ENCODE measurements at regions of chr16 and their contacts with region 1.

Region 1: DNA sequence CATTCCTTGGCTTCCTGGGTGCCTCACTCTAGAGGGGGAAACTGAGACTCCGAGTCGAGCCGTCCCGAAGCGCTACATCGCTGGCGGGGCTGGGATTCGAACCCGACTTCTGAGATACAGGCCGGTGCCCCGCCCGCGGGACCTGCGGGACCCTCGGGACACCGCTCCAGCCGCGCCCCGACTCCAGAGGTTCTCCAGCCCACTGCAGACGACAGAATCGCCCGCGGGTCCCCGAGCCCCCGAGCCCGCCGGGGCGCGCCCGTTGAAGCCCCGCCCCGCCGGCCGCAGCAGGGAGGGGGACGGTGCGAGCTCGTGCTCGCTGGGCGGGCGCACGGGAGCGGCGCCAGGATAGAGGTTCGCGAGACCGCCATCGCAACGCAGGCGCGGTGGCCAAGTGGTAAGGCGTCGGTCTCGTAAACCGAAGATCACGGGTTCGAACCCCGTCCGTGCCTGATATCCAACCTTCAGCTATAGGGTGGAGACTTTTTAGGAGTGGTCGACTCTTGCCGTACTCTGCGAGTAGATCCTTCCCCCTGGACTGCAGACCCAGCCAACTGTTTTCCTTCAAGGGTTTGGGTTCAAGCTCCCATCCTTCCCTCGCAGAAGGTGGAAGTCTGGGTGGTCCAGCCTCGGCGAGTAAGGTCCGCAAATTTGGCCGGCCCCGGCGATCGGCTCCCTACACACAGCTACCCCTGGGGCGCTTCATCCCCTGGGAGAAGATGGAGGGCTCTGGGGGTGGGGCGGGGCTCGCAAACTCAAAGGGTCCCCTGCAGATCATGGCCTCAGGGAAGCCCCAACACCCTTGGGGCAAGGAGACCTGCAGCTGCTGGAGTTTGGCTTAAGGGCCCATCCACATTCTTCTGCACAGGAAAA is 214.6 kb downstream of the MRTFB start:
- DNase-seq: peak; percentile 95
- ATAC-seq: peak; percentile 74
- H3K4me3 Mint-ChIP-seq: peak overlapping the region; percentile 84
- H3K27ac Mint-ChIP-seq: no peak overlapping the region
- H3K4me1 Mint-ChIP-seq: peaks cover 35% of the 10 kb centered on the region
- H3K27me3 Mint-ChIP-seq: no peaks in the 10 kb centered on the region; the same call in none of the 2 replicates
- CTCF ChIP-seq: no peak

Region 2: GRCh38 chr16:13935408-13935807 is 350.3 kb before region 1 on chr16:
- CTCF ChIA-PET with region 1: interaction called, 10 read pairs
- POLR2A ChIA-PET with region 1: no interaction called
- DNase-seq: peak; percentile 79
- ATAC-seq: peak; percentile 88
- H3K4me3 Mint-ChIP-seq: no peak overlapping the region
- H3K27ac Mint-ChIP-seq: no peak overlapping the region
- H3K4me1 Mint-ChIP-seq: no peaks in the 10 kb centered on the region
- H3K27me3 Mint-ChIP-seq: no peaks in the 10 kb centered on the region
- CTCF ChIP-seq: peak; percentile 94

Region 3: GRCh38 chr16:13968835-13969234 is 316.9 kb before region 1 on chr16:
- CTCF ChIA-PET with region 1: interaction called, 14 read pairs
- POLR2A ChIA-PET with region 1: no interaction called
- DNase-seq: no peak
- ATAC-seq: peak; percentile 28; the same call in 1 of the 2 replicates
- H3K4me3 Mint-ChIP-seq: no peak overlapping the region
- H3K27ac Mint-ChIP-seq: no peak overlapping the region
- H3K4me1 Mint-ChIP-seq: peaks cover 3% of the 10 kb centered on the region
- H3K27me3 Mint-ChIP-seq: no peaks in the 10 kb centered on the region
- CTCF ChIP-seq: no peak

Region 4: DNA sequence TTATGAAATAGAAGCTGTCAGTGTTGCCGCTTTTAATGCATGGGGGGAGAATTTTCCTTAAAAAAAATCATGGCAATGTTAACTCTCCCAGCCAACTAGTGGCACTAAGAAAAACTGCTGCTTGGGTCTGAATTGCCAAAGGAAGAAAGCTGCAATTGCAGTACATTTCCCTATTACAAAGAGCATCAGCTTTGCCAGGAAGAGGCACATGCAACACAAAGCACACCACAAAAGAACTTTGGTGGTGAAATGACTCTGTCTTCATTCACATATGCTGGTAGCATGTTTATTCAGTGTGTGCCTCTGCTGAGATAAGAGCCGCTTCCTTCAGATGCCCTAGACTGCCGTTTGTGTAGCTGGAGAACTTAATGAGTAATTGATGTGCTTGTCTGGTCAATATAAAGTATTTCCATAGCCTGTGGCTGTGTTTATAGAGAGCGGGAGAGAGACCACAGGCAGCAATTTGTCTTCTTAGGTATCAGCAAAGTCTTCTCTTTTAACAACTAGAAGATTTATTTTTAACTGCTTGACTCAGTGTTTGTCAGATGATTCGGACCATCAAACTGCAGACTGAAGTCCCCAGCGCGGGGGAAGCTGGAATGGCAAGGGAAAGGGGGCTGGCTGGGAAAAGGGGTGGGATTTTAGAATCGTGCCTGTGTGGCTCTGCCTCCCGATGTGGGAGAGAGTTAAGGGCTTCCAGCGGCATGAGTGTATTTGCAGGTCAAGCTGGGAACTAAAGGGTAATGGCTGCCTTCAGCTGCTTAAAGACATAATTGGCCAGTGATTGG is 99.5 kb before region 1 on chr16:
- CTCF ChIA-PET with region 1: interaction called, 11 read pairs
- POLR2A ChIA-PET with region 1: no interaction called
- DNase-seq: peak; percentile 46
- ATAC-seq: peak; percentile 92
- H3K4me3 Mint-ChIP-seq: peak overlapping the region; percentile 40
- H3K27ac Mint-ChIP-seq: peak overlapping the region; percentile 57
- H3K4me1 Mint-ChIP-seq: peaks cover 33% of the 10 kb centered on the region
- H3K27me3 Mint-ChIP-seq: no peaks in the 10 kb centered on the region
- CTCF ChIP-seq: 0 out of 2 replicates have a peak, but pooled peaks have one; percentile 16

Region 5: DNA sequence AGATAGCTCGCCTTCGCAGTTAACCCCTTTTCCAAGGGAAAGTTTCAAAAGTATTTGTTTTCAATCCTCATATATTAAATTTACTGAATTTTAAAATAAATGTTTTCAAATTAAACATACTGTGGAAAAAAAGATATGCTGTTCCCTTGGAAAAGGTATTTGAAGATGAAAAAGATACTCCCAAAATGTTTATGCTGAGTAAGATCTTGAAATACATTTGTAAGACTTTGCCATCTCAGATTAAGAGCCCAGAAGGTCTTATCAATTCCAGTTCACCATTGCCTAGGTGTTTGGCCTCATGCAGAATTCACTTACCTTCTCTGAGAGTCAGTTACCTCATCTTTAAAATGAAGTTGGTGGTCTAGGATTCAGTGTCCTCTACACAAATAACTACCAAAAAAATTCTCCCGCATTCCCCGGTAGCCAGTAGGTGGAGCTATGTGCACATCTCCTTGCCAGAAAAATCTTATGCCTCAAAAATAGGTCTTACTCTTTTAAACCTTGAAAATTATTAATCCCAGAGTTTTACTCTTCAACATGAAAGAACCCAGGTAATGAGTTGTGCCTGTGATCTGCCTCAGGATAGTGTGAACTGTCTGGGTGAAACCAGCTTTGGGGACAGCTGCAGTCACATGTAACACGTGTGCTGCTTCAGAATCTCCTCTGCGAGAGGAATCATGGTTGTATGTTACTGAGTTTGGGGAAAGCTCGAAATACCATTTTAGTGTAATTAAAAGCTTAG is 36.3 kb before region 1 on chr16:
- CTCF ChIA-PET with region 1: interaction called, 15 read pairs
- POLR2A ChIA-PET with region 1: no interaction called
- DNase-seq: peak; percentile 45
- ATAC-seq: no peak
- H3K4me3 Mint-ChIP-seq: no peak overlapping the region
- H3K27ac Mint-ChIP-seq: no peak overlapping the region
- H3K4me1 Mint-ChIP-seq: peaks cover 8% of the 10 kb centered on the region
- H3K27me3 Mint-ChIP-seq: no peaks in the 10 kb centered on the region
- CTCF ChIP-seq: peak; percentile 68

Region 6: GRCh38 chr16:14300705-14301168 is 15.0 kb after region 1 on chr16:
- CTCF ChIA-PET with region 1: interaction called, 25 read pairs
- POLR2A ChIA-PET with region 1: interaction called, 6 read pairs
- DNase-seq: peak; percentile 59
- ATAC-seq: peak; percentile 36
- H3K4me3 Mint-ChIP-seq: peak overlapping the region; percentile 79
- H3K27ac Mint-ChIP-seq: peak overlapping the region; percentile 71; the same call in 1 of the 2 replicates
- H3K4me1 Mint-ChIP-seq: peaks cover 30% of the 10 kb centered on the region
- H3K27me3 Mint-ChIP-seq: peaks cover 8% of the 10 kb centered on the region; the same call in 1 of the 2 replicates
- CTCF ChIP-seq: no peak

Region 7: DNA sequence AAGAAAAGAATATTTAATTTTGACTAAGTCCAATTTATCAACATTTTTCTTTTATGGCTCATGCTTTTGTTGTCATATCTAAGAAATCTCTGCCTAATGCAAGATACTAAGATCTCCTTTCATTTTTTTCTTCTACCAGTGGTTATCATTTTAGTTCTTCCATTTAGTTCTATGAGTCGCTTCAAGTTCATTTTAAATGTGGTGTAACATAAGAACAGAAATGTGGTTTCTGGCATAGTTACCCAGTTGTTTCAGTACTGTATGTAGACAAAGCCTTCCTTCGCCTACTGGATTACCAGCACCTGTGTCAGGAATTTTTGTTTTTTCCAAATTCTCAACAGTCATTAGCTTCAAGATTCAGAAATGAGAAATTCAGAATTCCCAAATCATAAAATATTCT is 168.6 kb after region 1 on chr16:
- CTCF ChIA-PET with region 1: no interaction called
- POLR2A ChIA-PET with region 1: no interaction called
- DNase-seq: no peak
- ATAC-seq: no peak
- H3K4me3 Mint-ChIP-seq: no peak overlapping the region
- H3K27ac Mint-ChIP-seq: no peak overlapping the region
- H3K4me1 Mint-ChIP-seq: peaks cover 11% of the 10 kb centered on the region
- H3K27me3 Mint-ChIP-seq: no peaks in the 10 kb centered on the region
- CTCF ChIP-seq: no peak

Region 8: DNA sequence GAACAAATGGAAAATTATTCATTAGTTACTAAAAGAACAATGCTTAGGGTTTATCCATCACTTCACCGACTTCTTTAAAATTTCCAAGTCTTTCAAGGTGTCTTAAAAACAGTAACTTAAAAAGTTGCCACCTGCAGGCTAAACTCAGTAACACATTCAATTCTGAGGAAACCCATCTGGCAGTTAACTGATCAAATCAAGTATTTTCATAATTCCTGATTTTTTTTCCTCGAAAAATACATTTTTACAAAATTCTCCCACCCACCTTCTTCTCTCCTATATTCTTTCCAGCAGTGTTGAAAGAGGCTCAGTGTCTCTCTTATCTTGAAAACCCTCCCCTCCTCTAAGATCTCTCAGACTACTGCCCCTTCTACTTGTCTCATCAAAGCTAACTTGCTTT is 314.4 kb after region 1 on chr16:
- CTCF ChIA-PET with region 1: no interaction called
- POLR2A ChIA-PET with region 1: no interaction called
- DNase-seq: no peak
- ATAC-seq: no peak
- H3K4me3 Mint-ChIP-seq: no peak overlapping the region
- H3K27ac Mint-ChIP-seq: no peak overlapping the region
- H3K4me1 Mint-ChIP-seq: no peaks in the 10 kb centered on the region
- H3K27me3 Mint-ChIP-seq: no peaks in the 10 kb centered on the region
- CTCF ChIP-seq: peak; percentile 18; the same call in 1 of the 2 replicates

Measured in WTC11 (cell line).